ENCODE measurements at regions of chr19 and their contacts with region 1.

Region 1: DNA sequence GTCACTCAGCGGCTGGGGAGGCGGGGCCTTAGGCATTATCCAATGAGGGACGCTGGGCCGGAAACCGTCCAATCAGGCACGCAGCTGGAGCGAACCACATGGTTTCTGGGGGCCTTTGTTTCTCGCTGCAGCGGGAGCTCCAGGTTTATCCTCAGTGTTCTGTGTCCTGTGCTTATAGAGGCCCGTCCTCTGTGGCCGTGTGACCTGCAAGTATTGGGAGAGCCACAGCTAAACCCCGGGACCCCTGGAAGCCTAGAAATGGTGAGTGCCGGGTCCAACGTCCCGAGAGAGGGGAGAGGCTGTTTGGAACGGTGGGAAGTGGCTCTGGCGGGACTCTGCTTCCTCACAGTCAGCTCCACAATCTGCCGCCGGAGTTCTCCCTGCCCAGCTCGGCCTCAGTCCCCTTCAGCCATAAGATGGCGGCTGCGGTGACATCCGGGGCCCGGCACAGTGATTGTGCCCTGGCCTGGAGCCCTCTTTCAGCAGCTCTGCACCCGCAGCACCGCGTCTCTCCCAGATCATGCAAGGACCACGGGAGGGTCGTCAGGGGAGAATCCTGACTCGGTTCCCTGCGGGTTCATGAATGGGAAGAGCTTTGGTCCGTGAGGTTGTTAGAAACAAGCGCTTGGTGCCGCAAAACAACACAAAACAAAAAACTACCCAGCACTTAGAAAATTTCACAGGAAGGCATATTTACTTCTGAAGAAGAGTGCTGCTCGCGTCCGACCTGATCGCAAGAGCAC is at the start of gene ZNF253:
- DNase-seq: peak; percentile 97
- H3K4me3 Mint-ChIP-seq: peak within 1 kb of the TSS; percentile 100
- H3K27ac Mint-ChIP-seq: peak within 1 kb of the TSS; percentile 100
- H3K4me1 Mint-ChIP-seq: peaks cover 22% of the 10 kb centered on the region
- H3K27me3 Mint-ChIP-seq: no peaks in the 10 kb centered on the region
- total RNA-seq, gene ZNF253: 12.9 to 14.7 TPM

Region 2: DNA sequence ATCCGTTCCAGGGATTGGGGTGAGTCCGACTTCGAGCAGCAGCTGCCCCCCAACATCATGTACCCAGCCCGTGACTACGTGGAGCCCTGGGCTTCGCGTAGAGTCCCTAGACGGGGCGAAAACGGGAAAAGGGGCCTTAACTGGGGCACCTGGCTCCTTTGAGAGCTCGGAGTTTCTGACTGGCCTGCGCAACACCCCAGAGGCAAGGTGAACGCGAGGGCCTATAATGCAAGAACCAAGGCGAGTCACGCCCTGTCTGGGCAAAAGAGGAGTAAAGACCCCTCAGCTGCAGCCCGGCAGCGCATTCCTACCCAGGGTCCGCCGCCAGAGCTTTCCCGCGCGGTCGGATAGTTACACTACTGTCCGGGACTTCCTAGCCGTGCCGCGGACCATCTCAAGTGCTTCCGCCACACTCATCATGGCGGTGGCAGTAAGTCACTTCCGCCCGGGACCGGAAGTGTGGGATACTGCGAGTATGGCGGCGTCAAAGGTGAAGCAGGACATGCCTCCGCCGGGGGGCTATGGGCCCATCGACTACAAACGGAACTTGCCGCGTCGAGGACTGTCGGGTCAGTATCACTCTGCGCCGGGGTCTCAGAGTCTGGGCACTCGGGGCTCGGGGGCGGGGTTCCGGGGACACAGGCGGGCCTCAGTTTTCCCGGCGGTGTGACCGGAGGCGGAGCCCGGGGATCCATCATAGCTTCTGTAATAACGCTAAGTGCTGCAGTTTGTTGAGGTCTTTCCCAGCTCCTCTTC is 350.0 kb before region 1 on chr19 and contains the start of gene NDUFA13:
- CTCF ChIA-PET with region 1: no interaction called
- POLR2A ChIA-PET with region 1: interaction called, 15 read pairs
- DNase-seq: peak; percentile 95
- H3K4me3 Mint-ChIP-seq: peak within 1 kb of the TSS; percentile 93
- H3K27ac Mint-ChIP-seq: peak within 1 kb of the TSS; percentile 94
- H3K4me1 Mint-ChIP-seq: peaks cover 33% of the 10 kb centered on the region
- H3K27me3 Mint-ChIP-seq: no peaks in the 10 kb centered on the region
- total RNA-seq, gene NDUFA13: 371 to 388 TPM

Region 3: GRCh38 chr19:19776041-19777008 is 89.6 kb before region 1 on chr19:
- CTCF ChIA-PET with region 1: interaction called, 3 read pairs
- POLR2A ChIA-PET with region 1: interaction called, 26 read pairs
- DNase-seq: peak; percentile 94
- H3K4me3 Mint-ChIP-seq: peak overlapping the region; percentile 92
- H3K27ac Mint-ChIP-seq: peak overlapping the region; percentile 77
- H3K4me1 Mint-ChIP-seq: peaks cover 41% of the 10 kb centered on the region
- H3K27me3 Mint-ChIP-seq: no peaks in the 10 kb centered on the region

Region 4: DNA sequence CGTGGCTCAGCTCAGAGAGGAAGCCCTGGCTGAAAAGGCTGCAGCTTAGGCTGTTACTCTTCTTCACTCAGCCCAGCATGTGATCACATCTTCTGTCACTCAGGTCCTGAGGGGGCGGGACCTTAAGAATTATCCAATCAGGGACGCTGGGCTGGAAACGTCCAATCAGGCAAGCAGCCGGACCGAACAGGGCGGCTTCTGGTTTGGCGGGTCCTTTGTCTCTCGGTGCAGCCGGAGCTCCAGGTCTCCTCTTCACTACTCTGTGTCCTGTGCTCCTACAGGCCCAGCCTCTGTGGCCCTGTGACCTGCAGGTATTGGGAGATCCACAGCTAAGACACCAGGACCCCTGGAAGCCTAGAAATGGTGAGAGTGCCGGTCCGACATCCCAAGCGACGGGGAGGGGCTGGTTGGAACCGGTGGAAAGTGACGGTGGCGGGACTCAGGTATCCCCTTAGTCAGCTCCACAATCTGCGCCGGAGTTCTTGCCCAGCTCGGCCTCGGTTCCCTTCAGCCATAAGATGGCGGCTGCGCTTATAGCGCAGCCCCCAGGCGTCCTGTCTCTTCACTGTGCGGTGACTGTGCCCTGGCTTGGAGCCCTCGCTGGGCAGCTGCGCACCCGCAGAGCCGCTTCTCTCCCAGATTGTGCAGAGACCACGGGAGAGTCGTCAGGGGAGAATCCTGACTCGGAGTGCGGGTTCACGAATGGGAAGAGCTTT is 35.0 kb after region 1 on chr19 and contains the start of gene ZNF93:
- CTCF ChIA-PET with region 1: interaction called, 4 read pairs
- POLR2A ChIA-PET with region 1: interaction called, 93 read pairs
- DNase-seq: peak; percentile 93
- H3K4me3 Mint-ChIP-seq: peak within 1 kb of the TSS; percentile 96
- H3K27ac Mint-ChIP-seq: peak within 1 kb of the TSS; percentile 93
- H3K4me1 Mint-ChIP-seq: peaks cover 31% of the 10 kb centered on the region
- H3K27me3 Mint-ChIP-seq: no peaks in the 10 kb centered on the region
- total RNA-seq, gene ZNF93: 11.4 to 11.7 TPM

Region 5: GRCh38 chr19:20661150-20661819 is 795.4 kb after region 1 on chr19 and contains the start of gene ZNF626:
- CTCF ChIA-PET with region 1: no interaction called
- POLR2A ChIA-PET with region 1: interaction called, 10 read pairs
- DNase-seq: peak; percentile 92
- H3K4me3 Mint-ChIP-seq: peak within 1 kb of the TSS; percentile 88
- H3K27ac Mint-ChIP-seq: peak within 1 kb of the TSS; percentile 84
- H3K4me1 Mint-ChIP-seq: peaks cover 23% of the 10 kb centered on the region
- H3K27me3 Mint-ChIP-seq: no peaks in the 10 kb centered on the region
- total RNA-seq, gene ZNF626: 7.6 to 8.5 TPM

Measured in activated CD4-positive, alpha-beta memory T cell treated with anti-CD3 and anti-CD28 coated beads, Interleukin-2, amount 10 ng/mL, durations not matched to agents 7 days and 5 days (primary cell).